ENCODE measurements at regions of chr2 and their contacts with region 1.

Region 1: GRCh38 chr2:217785544-217786045 is 217.2 kb downstream of the TNS1 start:
- DNase-seq: peak; percentile 79
- H3K4me3 Mint-ChIP-seq: no peak overlapping the region
- H3K27ac Mint-ChIP-seq: no peak overlapping the region
- H3K4me1 Mint-ChIP-seq: peaks cover 23% of the 10 kb centered on the region
- H3K27me3 Mint-ChIP-seq: peaks cover 5% of the 10 kb centered on the region

Region 2: DNA sequence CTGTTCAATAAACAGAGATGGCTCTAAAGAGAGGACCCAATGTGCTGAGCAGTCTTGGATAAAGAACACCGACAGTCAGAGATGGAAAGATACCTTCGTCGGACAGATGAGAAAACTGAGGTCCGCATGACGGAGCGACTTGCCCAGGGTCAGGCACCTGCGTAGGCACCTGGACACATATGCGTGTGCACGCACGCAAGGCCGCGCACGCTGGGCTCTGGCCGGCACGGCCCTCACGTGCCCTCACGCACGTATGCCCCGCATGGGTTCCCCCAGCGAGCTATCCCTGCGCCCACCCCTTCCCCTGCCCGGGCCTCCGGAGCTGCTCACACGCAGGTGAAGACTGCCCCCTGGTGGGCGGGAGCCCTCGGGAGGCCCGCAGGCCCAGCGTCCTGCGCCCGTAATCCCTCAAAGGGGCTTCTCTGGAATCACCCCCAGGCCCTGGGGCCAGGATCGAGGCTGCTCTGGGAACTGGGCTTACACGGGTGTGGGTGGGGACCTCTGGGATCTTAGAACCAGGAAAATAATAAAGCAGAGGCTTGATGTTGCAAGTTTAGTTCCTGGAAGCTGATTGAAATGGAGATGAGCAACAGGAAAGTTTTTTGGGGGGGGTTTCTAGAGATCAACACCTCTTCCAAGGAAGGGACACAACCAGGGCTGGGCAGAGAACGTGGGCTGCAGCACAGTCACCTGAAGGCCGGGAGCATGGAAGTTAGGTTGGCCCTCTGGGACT is 29.1 kb before region 1 on chr2:
- CTCF ChIA-PET with region 1: interaction called, 10 read pairs
- DNase-seq: peak; percentile 72
- H3K4me3 Mint-ChIP-seq: no peak overlapping the region
- H3K27ac Mint-ChIP-seq: no peak overlapping the region
- H3K4me1 Mint-ChIP-seq: peaks cover 27% of the 10 kb centered on the region
- H3K27me3 Mint-ChIP-seq: peaks cover 9% of the 10 kb centered on the region

Region 3: GRCh38 chr2:217880287-217880889 is 94.8 kb after region 1 on chr2:
- CTCF ChIA-PET with region 1: interaction called, 260 read pairs
- DNase-seq: no peak
- H3K4me3 Mint-ChIP-seq: no peak overlapping the region
- H3K27ac Mint-ChIP-seq: no peak overlapping the region
- H3K4me1 Mint-ChIP-seq: no peaks in the 10 kb centered on the region
- H3K27me3 Mint-ChIP-seq: peaks cover 21% of the 10 kb centered on the region

Region 4: GRCh38 chr2:217899231-217900009 is 113.8 kb after region 1 on chr2:
- CTCF ChIA-PET with region 1: interaction called, 15 read pairs
- DNase-seq: no peak
- H3K4me3 Mint-ChIP-seq: no peak overlapping the region
- H3K27ac Mint-ChIP-seq: no peak overlapping the region
- H3K4me1 Mint-ChIP-seq: peaks cover 13% of the 10 kb centered on the region
- H3K27me3 Mint-ChIP-seq: peaks cover 11% of the 10 kb centered on the region

Region 5: DNA sequence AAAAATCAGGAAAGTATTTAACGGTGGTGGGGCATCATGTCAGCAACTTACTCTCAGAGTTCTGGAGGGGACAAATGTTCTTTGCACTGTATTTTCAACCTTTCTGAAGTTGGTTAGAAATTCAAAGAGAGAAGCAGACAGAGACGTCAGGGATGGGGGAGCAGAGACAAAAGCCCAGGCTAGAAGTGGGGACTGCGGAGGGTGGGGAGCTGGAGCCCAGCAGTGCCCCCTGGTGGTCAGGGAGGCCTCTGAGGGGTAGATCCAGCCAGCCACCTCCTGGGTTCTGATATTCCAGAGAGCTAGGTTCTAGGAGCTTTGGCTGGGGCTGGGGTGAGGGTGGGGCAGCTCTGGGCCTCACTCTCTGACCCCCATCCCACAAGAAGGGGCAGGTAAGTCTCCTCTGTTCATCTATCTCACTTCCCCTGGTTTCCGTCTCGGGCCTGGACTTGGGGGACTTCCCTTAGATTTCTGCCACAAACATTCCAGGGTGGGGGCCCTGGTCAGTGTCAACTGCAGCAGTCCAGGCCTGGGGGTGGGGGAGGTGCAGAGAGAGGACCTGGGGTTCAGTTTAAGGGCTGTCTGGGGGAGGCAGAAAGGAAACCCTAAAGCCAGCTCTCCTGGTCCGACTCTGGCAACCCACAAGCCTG is 208.3 kb after region 1 on chr2:
- CTCF ChIA-PET with region 1: interaction called, 96 read pairs
- DNase-seq: peak; percentile 69
- H3K4me3 Mint-ChIP-seq: no peak overlapping the region
- H3K27ac Mint-ChIP-seq: no peak overlapping the region
- H3K4me1 Mint-ChIP-seq: no peaks in the 10 kb centered on the region
- H3K27me3 Mint-ChIP-seq: peaks cover 17% of the 10 kb centered on the region

Region 6: GRCh38 chr2:218074031-218074430 is 288.4 kb after region 1 on chr2:
- CTCF ChIA-PET with region 1: interaction called, 141 read pairs
- DNase-seq: peak; percentile 51
- H3K4me3 Mint-ChIP-seq: no peak overlapping the region
- H3K27ac Mint-ChIP-seq: no peak overlapping the region
- H3K4me1 Mint-ChIP-seq: peaks cover 4% of the 10 kb centered on the region
- H3K27me3 Mint-ChIP-seq: peaks cover 16% of the 10 kb centered on the region

Region 7: GRCh38 chr2:218292048-218293014 is 506.7 kb after region 1 on chr2 and contains the start of gene TMBIM1:
- CTCF ChIA-PET with region 1: no interaction called
- DNase-seq: peak; percentile 82
- H3K4me3 Mint-ChIP-seq: peak within 1 kb of the TSS; percentile 78
- H3K27ac Mint-ChIP-seq: peak within 1 kb of the TSS; percentile 88
- H3K4me1 Mint-ChIP-seq: peaks cover 69% of the 10 kb centered on the region
- H3K27me3 Mint-ChIP-seq: peaks cover 4% of the 10 kb centered on the region

Measured in activated naive CD4-positive, alpha-beta T cell treated with anti-CD3 and anti-CD28 coated beads, Interleukin-2, amount 10 ng/mL, durations not matched to agents 7 days and 5 days (primary cell).